Adrenal gland (tissue), 19 donors: ENCODE measurements at regions of chr9 and their contacts with region 1.

Region 1: DNA sequence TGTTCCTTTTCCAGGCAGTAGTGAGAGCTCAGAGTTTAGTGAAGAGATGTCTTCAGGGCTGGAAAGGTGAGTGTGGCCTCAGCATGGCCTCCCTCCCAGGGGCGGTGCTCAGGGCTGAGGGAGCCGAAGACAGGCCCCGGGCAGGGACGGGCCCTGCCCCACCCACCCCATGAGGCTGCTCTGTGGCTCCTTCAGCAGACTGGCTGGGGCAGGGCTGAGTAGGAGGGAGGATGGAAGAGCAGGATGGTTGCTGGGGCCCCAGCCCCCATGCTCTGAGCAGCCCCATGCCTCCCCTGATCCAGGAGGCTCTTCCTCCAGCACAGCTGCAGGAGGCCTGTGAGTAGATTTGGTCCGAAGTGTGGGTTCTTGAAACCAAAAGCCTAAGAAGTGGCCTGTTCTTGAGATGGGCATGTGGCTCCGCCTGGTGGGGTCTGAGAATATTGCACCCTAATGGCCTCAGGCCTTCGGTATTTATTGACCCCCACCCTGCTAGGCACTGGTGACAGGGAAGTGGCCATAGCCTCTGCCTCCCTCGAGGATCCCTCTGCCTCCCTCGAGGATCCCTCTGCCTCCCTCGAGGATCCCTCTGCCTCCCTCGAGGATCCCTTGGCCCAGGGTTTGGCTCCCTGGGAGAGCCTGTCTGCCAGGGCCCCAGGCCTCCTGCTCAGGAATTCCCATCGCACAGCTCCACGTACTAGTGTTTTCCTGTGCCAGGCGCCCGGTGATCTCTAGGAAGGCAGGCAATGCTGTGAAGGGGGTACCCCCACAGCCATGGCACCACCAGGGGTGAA is 65.4 kb upstream of the GARNL3 start:
- DNase-seq: peak; percentile 74 to 96 (median 85)
- H3K4me3 ChIP-seq: no peak overlapping the region
- H3K27ac ChIP-seq: peak overlapping the region in 2 of 5 donors; percentile 59 to 67
- H3K4me1 ChIP-seq: peaks cover 0 to 9% of the 10 kb centered on the region in 2 donors
- H3K27me3 ChIP-seq: no peaks in the 10 kb centered on the region
- CTCF ChIP-seq: peak; percentile 92 to 99 (median 98)
- POLR2A ChIP-seq: no peak

Region 2: DNA sequence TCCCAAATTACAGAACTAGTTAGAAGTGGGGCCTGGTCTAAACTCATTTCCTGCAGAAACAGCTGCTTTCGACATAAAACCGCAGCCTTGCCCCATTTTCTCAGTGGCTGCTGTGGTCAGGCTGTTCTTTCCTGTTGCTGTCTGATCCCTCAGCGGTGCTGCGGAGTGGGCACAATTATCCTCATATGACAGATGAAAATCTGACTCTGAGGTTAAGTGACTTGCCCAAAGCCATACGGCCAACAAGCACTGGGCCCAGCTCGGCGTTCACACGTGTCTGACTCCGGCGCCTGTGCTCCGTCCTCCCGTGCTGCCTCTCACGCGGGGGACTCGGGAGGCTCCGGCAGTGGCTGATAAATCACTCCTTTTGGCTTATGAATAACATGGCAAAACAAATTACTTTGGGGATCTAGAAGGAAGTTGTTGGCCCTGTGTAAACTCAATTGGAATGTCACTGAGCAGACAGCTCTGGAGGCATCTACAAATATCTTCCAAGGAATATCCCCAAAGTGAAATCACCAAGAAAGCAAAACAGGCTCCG is 728.0 kb before region 1 on chr9:
- intact Hi-C with region 1: no loop called
- DNase-seq: peak; percentile 39 to 87 (median 65)
- H3K4me3 ChIP-seq: no peak overlapping the region
- H3K27ac ChIP-seq: peak overlapping the region in 1 of 5 donors; percentile 21
- H3K4me1 ChIP-seq: no peaks in the 10 kb centered on the region
- H3K27me3 ChIP-seq: no peaks in the 10 kb centered on the region
- CTCF ChIP-seq: no peak
- POLR2A ChIP-seq: no peak

Region 3: DNA sequence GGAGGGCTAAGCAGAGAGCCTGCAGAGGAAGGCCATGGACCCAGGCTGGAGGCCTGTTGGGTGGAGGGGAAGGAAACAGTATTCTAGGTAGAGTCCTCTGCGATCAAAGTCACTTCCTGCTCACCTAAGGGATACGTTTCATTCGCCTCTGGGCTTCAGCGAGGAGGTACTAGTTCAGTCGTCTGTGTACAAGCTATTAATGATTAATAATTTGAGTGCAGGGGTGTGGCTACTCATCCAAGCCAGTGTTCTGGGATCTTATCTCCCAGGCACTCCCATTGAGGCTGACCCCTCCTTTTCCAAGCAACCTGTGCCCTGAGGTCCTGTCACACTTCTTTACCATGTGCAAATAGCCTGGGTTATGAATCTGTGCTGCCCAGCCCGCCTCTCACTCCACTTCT is 259.4 kb before region 1 on chr9:
- intact Hi-C with region 1: loop called (anchors 2 kb)
- DNase-seq: no peak
- H3K4me3 ChIP-seq: no peak overlapping the region
- H3K27ac ChIP-seq: no peak overlapping the region
- H3K4me1 ChIP-seq: peaks cover 6 to 10% of the 10 kb centered on the region in 2 donors
- H3K27me3 ChIP-seq: no peaks in the 10 kb centered on the region
- CTCF ChIP-seq: no peak
- POLR2A ChIP-seq: no peak

Region 4: GRCh38 chr9:126962336-126962735 is 236.9 kb before region 1 on chr9:
- intact Hi-C with region 1: loop called (anchors 5 kb)
- DNase-seq: no peak
- H3K4me3 ChIP-seq: no peak overlapping the region
- H3K27ac ChIP-seq: no peak overlapping the region
- H3K4me1 ChIP-seq: peaks cover 0 to 4% of the 10 kb centered on the region in 2 donors
- H3K27me3 ChIP-seq: no peaks in the 10 kb centered on the region
- CTCF ChIP-seq: no peak
- POLR2A ChIP-seq: no peak

Region 5: GRCh38 chr9:127122176-127123063 is 76.8 kb before region 1 on chr9 and contains the start of gene ANGPTL2:
- intact Hi-C with region 1: loop called in 1 of 2 experiments (anchors 10 kb)
- DNase-seq: peak; percentile 81 to 92 (median 87)
- H3K4me3 ChIP-seq: peak within 1 kb of the TSS in 3 of 4 donors; percentile 9 to 41 (median 17)
- H3K27ac ChIP-seq: peak within 1 kb of the TSS in 4 of 5 donors; percentile 51 to 86 (median 64)
- H3K4me1 ChIP-seq: peaks cover 19 to 29% of the 10 kb centered on the region in 2 donors
- H3K27me3 ChIP-seq: no peaks in the 10 kb centered on the region
- CTCF ChIP-seq: peak in 1 of 6 experiments; percentile 26
- POLR2A ChIP-seq: peak in 1 of 2 donors; percentile 74
- total RNA-seq, gene ANGPTL2: 3.0 to 32.6 (median 12.2) TPM

Region 6: DNA sequence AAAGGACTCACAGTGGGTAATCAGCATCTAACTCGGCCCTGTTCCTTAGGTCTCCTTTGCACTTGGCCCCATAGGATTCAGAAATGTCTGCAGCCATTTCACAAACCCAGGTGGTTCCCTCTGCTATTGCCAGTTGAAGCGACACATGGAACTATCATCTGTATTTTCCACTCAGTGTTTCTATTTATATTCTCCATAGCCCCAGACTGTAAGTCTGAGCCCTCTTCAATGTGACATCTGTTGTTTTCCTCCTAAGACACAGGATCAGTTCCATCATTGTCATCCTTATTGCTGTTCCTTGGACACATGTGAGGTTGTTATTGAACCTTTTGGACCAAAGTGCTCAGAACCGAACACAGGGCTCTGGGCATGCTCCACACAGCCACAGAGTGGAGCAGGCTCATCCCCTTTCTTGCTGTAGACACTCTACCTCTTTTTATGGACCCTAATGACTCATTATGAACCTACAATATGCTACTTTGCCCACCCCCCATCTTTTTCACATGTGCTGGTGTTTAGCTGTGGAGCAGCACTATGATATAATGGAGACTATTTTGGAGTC is 101.8 kb after region 1 on chr9:
- intact Hi-C with region 1: no loop called
- DNase-seq: no peak
- H3K4me3 ChIP-seq: no peak overlapping the region
- H3K27ac ChIP-seq: no peak overlapping the region
- H3K4me1 ChIP-seq: no peaks in the 10 kb centered on the region
- H3K27me3 ChIP-seq: no peaks in the 10 kb centered on the region
- CTCF ChIP-seq: no peak
- POLR2A ChIP-seq: no peak

Region 7: GRCh38 chr9:127333221-127334064 is 134.2 kb after region 1 on chr9:
- intact Hi-C with region 1: no loop called
- DNase-seq: peak in 3 of 7 donors; percentile 27 to 34 (median 34)
- H3K4me3 ChIP-seq: no peak overlapping the region
- H3K27ac ChIP-seq: peak overlapping the region in 1 of 5 donors; percentile 20
- H3K4me1 ChIP-seq: peaks cover 16 to 25% of the 10 kb centered on the region in 2 donors
- H3K27me3 ChIP-seq: no peaks in the 10 kb centered on the region
- CTCF ChIP-seq: no peak
- POLR2A ChIP-seq: no peak